Thyroid gland (tissue), 4 donors: ENCODE measurements at regions of chr6 and their contacts with region 1.

Region 1: GRCh38 chr6:148464319-148465010 is 121.8 kb downstream of the SASH1 start:
- DNase-seq: peak; percentile 71
- H3K4me3 ChIP-seq: no peak overlapping the region
- H3K27ac ChIP-seq: peak overlapping the region; percentile 37 to 87 (median 76)
- H3K4me1 ChIP-seq: peaks cover 69 to 77% of the 10 kb centered on the region in 2 donors
- H3K27me3 ChIP-seq: no peaks in the 10 kb centered on the region
- CTCF ChIP-seq: peak; percentile 81 to 96 (median 94)
- POLR2A ChIP-seq: peak in 1 of 2 donors; percentile 4

Region 2: GRCh38 chr6:148177589-148178233 is 286.8 kb before region 1 on chr6:
- intact Hi-C with region 1: loop called (anchors 5 kb)
- DNase-seq: peak; percentile 74 to 81
- H3K4me3 ChIP-seq: no peak overlapping the region
- H3K27ac ChIP-seq: peak overlapping the region in 1 of 3 donors; percentile 1
- H3K4me1 ChIP-seq: peaks cover 0 to 14% of the 10 kb centered on the region in 2 donors
- H3K27me3 ChIP-seq: no peaks in the 10 kb centered on the region
- CTCF ChIP-seq: peak; percentile 77 to 93 (median 79)
- POLR2A ChIP-seq: no peak

Region 3: DNA sequence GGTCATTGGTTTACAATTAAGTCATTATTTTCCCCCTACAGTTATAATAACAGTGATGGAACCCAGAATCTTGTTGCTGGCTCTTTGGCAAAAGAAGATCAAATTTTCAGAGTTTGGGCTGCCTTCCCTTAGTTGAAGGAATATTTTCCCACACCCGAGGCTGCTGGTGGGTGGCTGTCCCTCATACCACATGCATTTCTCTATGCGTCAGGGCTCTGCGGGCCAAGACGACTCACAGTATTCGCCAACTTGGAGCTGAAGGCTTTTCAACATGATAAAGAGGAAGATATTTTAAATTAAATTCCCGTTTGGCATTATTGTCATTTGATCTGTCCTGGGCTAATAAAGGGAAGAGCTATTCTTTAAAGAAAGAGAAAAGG is 224.0 kb before region 1 on chr6:
- intact Hi-C with region 1: loop called (anchors 10 kb)
- DNase-seq: no peak
- H3K4me3 ChIP-seq: no peak overlapping the region
- H3K27ac ChIP-seq: peak overlapping the region in 2 of 3 donors; percentile 68 to 77
- H3K4me1 ChIP-seq: peaks cover 44 to 55% of the 10 kb centered on the region in 2 donors
- H3K27me3 ChIP-seq: no peaks in the 10 kb centered on the region
- CTCF ChIP-seq: no peak
- POLR2A ChIP-seq: no peak

Region 4: DNA sequence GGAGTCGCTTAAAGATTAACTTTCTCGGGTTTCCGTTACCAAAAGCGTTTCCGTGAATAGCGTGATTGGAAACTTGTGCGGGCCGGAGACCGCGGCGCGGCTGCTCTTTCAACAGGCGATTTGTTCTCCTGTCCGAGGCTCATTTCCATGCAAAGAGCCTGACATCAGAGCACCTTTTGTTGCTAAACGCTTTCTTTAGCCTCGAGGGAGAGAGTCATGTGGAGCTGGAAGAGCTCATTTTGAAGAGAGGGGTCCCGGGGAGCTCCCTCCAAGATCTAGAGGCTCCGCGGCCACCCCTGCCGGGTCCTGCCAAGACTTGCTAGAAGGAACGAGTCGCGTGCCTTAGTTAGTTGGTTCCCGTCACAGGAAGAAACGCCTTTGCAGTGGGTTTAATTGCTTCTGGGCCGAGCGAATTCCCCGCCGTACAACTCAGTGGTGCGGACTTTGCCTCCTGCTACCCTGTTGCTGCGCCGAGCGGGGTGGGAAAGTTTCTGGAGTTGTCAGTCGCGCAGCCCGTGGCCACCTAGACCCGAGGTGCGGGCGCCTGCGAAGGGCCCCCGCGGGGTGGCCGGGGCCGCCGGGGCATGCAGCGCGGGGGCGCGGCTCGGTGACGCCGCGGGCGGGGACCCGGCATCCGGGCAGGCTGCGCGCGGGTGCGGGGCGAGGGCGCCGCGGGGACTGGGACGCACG is 122.0 kb before region 1 on chr6 and contains the start of gene SASH1:
- intact Hi-C with region 1: loop called (anchors 10 kb)
- DNase-seq: peak; percentile 72
- H3K4me3 ChIP-seq: peak within 1 kb of the TSS; percentile 64 to 76 (median 72)
- H3K27ac ChIP-seq: peak within 1 kb of the TSS; percentile 95 to 97 (median 96)
- H3K4me1 ChIP-seq: peaks cover 36 to 44% of the 10 kb centered on the region in 2 donors
- H3K27me3 ChIP-seq: no peaks in the 10 kb centered on the region
- CTCF ChIP-seq: no peak
- POLR2A ChIP-seq: peak; percentile 8 to 70
- total RNA-seq, gene SASH1: 154 to 235 (median 190) TPM